CD8-positive, alpha-beta memory T cell (primary cell): ENCODE measurements at regions of chr7 and their contacts with region 1.

Region 1: DNA sequence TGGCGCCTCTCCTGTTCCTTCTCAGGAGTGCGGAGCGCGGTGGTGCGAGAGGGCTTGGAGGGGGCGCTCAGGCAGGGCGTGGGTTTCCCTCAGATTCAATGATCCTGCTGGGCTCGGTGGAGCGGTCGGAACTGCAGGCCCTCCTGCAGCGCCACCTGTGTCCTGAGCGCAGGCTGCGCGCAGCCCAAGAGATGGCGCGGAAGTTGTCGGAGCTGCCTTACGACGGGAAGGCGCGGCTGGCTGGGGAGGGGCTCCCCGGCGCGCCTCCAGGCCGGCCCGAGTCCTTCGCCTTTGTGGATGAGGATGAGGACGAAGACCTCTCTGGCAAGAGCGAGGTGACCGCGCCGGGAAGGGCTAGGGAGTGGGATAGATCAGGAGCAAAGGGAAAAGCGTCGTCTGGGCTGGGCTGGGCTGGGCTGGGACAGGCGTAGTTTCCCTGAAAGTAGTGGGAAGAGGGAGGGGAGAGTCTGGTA is 17.0 kb downstream of the FAM131B start:
- DNase-seq: peak; percentile 38 to 75 (median 51)
- H3K4me3 ChIP-seq: peak overlapping the region; percentile 23
- H3K4me3 Mint-ChIP-seq: peak overlapping the region in 6 of 7 donors; percentile 58 to 79 (median 78)
- H3K27ac ChIP-seq: no peak overlapping the region
- H3K27ac Mint-ChIP-seq: peak overlapping the region in 2 of 8 donors; percentile 42 to 92
- H3K4me1 ChIP-seq: peaks cover 8% of the 10 kb centered on the region
- H3K4me1 Mint-ChIP-seq: peaks cover 7 to 10% (median 9%) of the 10 kb centered on the region in 3 donors
- H3K27me3 ChIP-seq: no peaks in the 10 kb centered on the region
- H3K27me3 Mint-ChIP-seq: peaks cover 7 to 16% of the 10 kb centered on the region in 2 donors

Region 2: GRCh38 chr7:143334244-143334643 is 11.2 kb before region 1 on chr7:
- CTCF ChIA-PET with region 1: interaction called, 13 read pairs
- POLR2A ChIA-PET with region 1: no interaction called
- DNase-seq: no peak
- H3K4me3 ChIP-seq: no peak overlapping the region
- H3K4me3 Mint-ChIP-seq: no peak overlapping the region
- H3K27ac ChIP-seq: no peak overlapping the region
- H3K27ac Mint-ChIP-seq: no peak overlapping the region
- H3K4me1 ChIP-seq: no peaks in the 10 kb centered on the region
- H3K4me1 Mint-ChIP-seq: peaks cover 0 to 2% (median 0%) of the 10 kb centered on the region in 3 donors
- H3K27me3 ChIP-seq: peaks cover 8% of the 10 kb centered on the region
- H3K27me3 Mint-ChIP-seq: peaks cover 11 to 36% of the 10 kb centered on the region in 2 donors

Region 3: GRCh38 chr7:143362131-143363015 is 16.9 kb after region 1 on chr7 and contains the start of gene FAM131B:
- CTCF ChIA-PET with region 1: interaction called, 12 read pairs
- POLR2A ChIA-PET with region 1: no interaction called
- DNase-seq: peak in 3 of 5 donors; percentile 34 to 64 (median 38)
- H3K4me3 ChIP-seq: peak within 1 kb of the TSS; percentile 47
- H3K4me3 Mint-ChIP-seq: peak within 1 kb of the TSS; percentile 74 to 96 (median 85)
- H3K27ac ChIP-seq: no peak within 1 kb of the TSS
- H3K27ac Mint-ChIP-seq: peak within 1 kb of the TSS in 6 of 8 donors; percentile 37 to 91 (median 68)
- H3K4me1 ChIP-seq: peaks cover 7% of the 10 kb centered on the region
- H3K4me1 Mint-ChIP-seq: peaks cover 10 to 16% (median 11%) of the 10 kb centered on the region in 3 donors
- H3K27me3 ChIP-seq: peaks cover 25% of the 10 kb centered on the region
- H3K27me3 Mint-ChIP-seq: peaks cover 14 to 25% of the 10 kb centered on the region in 2 donors
- total RNA-seq, gene FAM131B: 2.4 to 2.8 TPM

Region 4: DNA sequence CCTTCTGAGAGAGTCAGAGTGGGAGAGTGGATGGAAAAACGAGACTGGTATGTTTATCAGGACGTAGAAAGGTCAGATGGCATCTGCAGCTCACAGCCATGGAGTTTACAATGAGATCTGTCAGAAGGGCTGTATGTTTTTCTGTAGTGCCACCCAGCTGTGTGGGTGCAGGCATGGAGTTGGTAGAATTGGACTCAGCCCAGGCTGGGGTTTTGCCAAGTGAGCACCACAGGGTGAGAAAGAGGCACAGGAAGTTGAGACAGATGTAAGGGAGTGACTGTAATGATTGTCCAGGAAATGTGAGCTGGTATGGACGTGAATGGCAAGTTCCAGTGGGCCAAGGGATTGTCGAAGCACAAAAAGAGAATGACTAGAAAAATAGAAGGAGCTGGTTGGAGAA is 26.6 kb after region 1 on chr7:
- CTCF ChIA-PET with region 1: interaction called, 8 read pairs
- POLR2A ChIA-PET with region 1: interaction called, 14 read pairs
- DNase-seq: peak in 4 of 5 donors; percentile 19 to 76 (median 50)
- H3K4me3 ChIP-seq: no peak overlapping the region
- H3K4me3 Mint-ChIP-seq: peak overlapping the region in 6 of 7 donors; percentile 5 to 76 (median 41)
- H3K27ac ChIP-seq: no peak overlapping the region
- H3K27ac Mint-ChIP-seq: peak overlapping the region; percentile 15 to 93 (median 87)
- H3K4me1 ChIP-seq: peaks cover 39% of the 10 kb centered on the region
- H3K4me1 Mint-ChIP-seq: peaks cover 56 to 60% (median 58%) of the 10 kb centered on the region in 3 donors
- H3K27me3 ChIP-seq: no peaks in the 10 kb centered on the region
- H3K27me3 Mint-ChIP-seq: no peaks in the 10 kb centered on the region

Region 5: GRCh38 chr7:143394790-143395602 is 49.5 kb after region 1 on chr7:
- CTCF ChIA-PET with region 1: no interaction called
- POLR2A ChIA-PET with region 1: no interaction called
- DNase-seq: no peak
- H3K4me3 ChIP-seq: no peak overlapping the region
- H3K4me3 Mint-ChIP-seq: peak overlapping the region in 2 of 7 donors; percentile 8 to 36
- H3K27ac ChIP-seq: no peak overlapping the region
- H3K27ac Mint-ChIP-seq: peak overlapping the region in 6 of 8 donors; percentile 6 to 86 (median 42)
- H3K4me1 ChIP-seq: no peaks in the 10 kb centered on the region
- H3K4me1 Mint-ChIP-seq: peaks cover 16 to 19% (median 18%) of the 10 kb centered on the region in 3 donors
- H3K27me3 ChIP-seq: no peaks in the 10 kb centered on the region
- H3K27me3 Mint-ChIP-seq: no peaks in the 10 kb centered on the region